CD8-positive, alpha-beta T cell (primary cell): ENCODE measurements at regions of chr2 and their contacts with region 1.

Region 1: GRCh38 chr2:37925063-37925897 is at the start of gene RMDN2:
- DNase-seq: peak; percentile 37 to 92 (median 77)
- ATAC-seq: peak; percentile 80
- H3K4me3 ChIP-seq: peak within 1 kb of the TSS; percentile 68 to 82
- H3K4me3 Mint-ChIP-seq: peak within 1 kb of the TSS; percentile 92
- H3K27ac ChIP-seq: peak within 1 kb of the TSS; percentile 68 to 79
- H3K27ac Mint-ChIP-seq: peak within 1 kb of the TSS; percentile 92
- H3K4me1 ChIP-seq: peaks cover 11% of the 10 kb centered on the region
- H3K4me1 Mint-ChIP-seq: peaks cover 32% of the 10 kb centered on the region
- H3K27me3 ChIP-seq: peaks cover 0 to 2% of the 10 kb centered on the region in 2 experiments
- H3K27me3 Mint-ChIP-seq: no peaks in the 10 kb centered on the region
- CTCF ChIP-seq: no peak
- total RNA-seq, gene RMDN2: 3.4 to 3.9 TPM

Region 2: DNA sequence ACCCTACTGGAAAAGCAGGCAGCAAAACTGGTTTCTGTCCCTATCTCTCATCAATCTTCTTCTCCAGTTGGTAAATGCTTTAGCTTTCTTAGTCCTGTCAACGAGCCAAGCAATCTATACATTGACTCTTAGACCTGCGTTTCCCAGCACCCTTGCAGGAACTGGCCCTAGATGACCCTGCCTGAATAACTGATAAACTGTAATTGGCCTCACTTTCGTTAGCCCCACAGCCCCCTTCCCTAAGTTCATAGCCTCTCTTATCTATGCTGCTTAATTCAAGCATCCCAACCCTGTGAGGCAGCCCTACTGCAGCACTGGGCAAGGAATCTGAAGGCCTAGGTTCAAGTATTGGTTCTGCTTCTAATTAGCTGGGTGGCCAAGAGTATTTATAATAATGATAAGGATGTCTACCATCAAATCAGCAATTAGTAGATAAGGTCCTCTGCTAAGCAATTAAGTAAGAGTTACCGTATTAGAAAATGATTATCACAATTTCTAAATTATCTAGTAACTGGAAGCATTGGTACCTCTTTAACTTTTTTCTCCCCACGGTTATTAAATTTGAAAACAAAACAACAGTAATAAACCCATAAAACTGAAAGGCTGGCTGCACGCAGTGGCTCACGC is 86.6 kb before region 1 on chr2:
- CTCF ChIA-PET with region 1: no interaction called
- POLR2A ChIA-PET with region 1: no interaction called
- intact Hi-C with region 1: no loop called
- DNase-seq: no peak
- ATAC-seq: no peak
- H3K4me3 ChIP-seq: no peak overlapping the region
- H3K4me3 Mint-ChIP-seq: no peak overlapping the region
- H3K27ac ChIP-seq: no peak overlapping the region
- H3K27ac Mint-ChIP-seq: no peak overlapping the region
- H3K4me1 ChIP-seq: no peaks in the 10 kb centered on the region
- H3K4me1 Mint-ChIP-seq: no peaks in the 10 kb centered on the region
- H3K27me3 ChIP-seq: peaks cover 0 to 3% of the 10 kb centered on the region in 2 experiments
- H3K27me3 Mint-ChIP-seq: peaks cover 6% of the 10 kb centered on the region
- CTCF ChIP-seq: no peak

Region 3: GRCh38 chr2:37890893-37891495 is 34.3 kb before region 1 on chr2:
- CTCF ChIA-PET with region 1: interaction called, 4 read pairs
- POLR2A ChIA-PET with region 1: interaction called, 4 read pairs
- intact Hi-C with region 1: loop called in 1 of 2 experiments (anchors 1 kb)
- DNase-seq: peak; percentile 27 to 75 (median 68)
- ATAC-seq: peak; percentile 57
- H3K4me3 ChIP-seq: no peak overlapping the region
- H3K4me3 Mint-ChIP-seq: no peak overlapping the region
- H3K27ac ChIP-seq: no peak overlapping the region
- H3K27ac Mint-ChIP-seq: no peak overlapping the region
- H3K4me1 ChIP-seq: peaks cover 36% of the 10 kb centered on the region
- H3K4me1 Mint-ChIP-seq: peaks cover 40% of the 10 kb centered on the region
- H3K27me3 ChIP-seq: peaks cover 0 to 2% of the 10 kb centered on the region in 2 experiments
- H3K27me3 Mint-ChIP-seq: peaks cover 2% of the 10 kb centered on the region
- CTCF ChIP-seq: peak; percentile 67